HEK293 (cell line): ENCODE measurements at regions of chr9 and their contacts with region 1.

Region 1: GRCh38 chr9:137034863-137035761 is 3.2 kb upstream of the FUT7 start:
- H3K4me3 ChIP-seq: no peak overlapping the region
- H3K27ac ChIP-seq: no peak overlapping the region
- H3K4me1 ChIP-seq: no peaks in the 10 kb centered on the region
- CTCF ChIP-seq: peak; percentile 93

Region 2: DNA sequence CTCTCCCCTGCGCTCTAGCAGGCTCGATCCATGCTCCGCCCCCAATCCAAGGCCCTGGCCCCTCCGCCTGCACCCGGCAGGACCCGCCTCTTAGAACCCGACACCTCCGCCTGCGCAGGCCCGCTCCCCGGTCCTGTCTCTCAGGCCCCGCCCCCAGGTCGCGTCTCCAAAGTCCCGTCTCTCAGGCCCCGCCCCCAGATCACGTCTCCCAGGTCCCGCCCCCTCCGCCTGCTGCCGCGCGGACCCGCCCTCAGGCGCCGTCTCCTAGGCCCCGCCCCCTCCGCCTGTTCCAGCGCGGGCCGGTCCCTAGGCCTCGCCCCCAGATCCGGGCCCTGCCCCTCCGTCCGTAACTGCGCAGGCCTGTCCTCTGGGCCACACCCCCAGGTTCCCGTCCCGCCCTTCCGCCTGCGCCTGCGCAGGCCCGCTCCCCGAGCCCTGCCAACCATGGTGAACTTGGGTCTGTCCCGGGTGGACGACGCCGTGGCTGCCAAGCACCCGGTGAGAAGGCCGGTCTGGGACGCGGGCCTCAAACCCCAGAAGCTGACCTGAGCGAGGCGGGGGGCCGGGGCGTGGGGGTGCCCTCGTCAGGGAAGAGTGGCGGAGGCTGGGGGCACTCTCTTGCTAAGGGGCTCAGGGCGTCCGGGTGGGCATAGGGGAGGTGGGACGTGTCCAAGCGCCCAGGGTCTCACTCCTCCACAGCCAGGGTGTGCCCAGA is 244.0 kb before region 1 on chr9 and contains the start of gene TMEM141:
- CTCF ChIA-PET with region 1: interaction called, 61 read pairs
- POLR2A ChIA-PET with region 1: interaction called, 8 read pairs
- H3K4me3 ChIP-seq: peak within 1 kb of the TSS; percentile 47
- H3K27ac ChIP-seq: peak within 1 kb of the TSS; percentile 74
- H3K4me1 ChIP-seq: peaks cover 7% of the 10 kb centered on the region
- CTCF ChIP-seq: no peak

Region 3: GRCh38 chr9:136944519-136945279 is 90.4 kb before region 1 on chr9 and contains the starts of genes C8G and FBXW5:
- CTCF ChIA-PET with region 1: interaction called, 119 read pairs
- POLR2A ChIA-PET with region 1: interaction called, 16 read pairs
- H3K4me3 ChIP-seq: peak within 1 kb of the TSS; percentile 51
- H3K27ac ChIP-seq: peak within 1 kb of the TSS; percentile 90
- H3K4me1 ChIP-seq: no peaks in the 10 kb centered on the region
- CTCF ChIP-seq: peak; percentile 96

Region 4: GRCh38 chr9:136991993-136992818 is 42.9 kb before region 1 on chr9 and contains the start of gene PAXX:
- CTCF ChIA-PET with region 1: interaction called, 38 read pairs
- POLR2A ChIA-PET with region 1: interaction called, 6 read pairs
- H3K4me3 ChIP-seq: peak within 1 kb of the TSS; percentile 72
- H3K27ac ChIP-seq: peak within 1 kb of the TSS; percentile 83
- H3K4me1 ChIP-seq: peaks cover 5% of the 10 kb centered on the region
- CTCF ChIP-seq: peak; percentile 33; the same call in 1 of the 2 replicates

Region 5: DNA sequence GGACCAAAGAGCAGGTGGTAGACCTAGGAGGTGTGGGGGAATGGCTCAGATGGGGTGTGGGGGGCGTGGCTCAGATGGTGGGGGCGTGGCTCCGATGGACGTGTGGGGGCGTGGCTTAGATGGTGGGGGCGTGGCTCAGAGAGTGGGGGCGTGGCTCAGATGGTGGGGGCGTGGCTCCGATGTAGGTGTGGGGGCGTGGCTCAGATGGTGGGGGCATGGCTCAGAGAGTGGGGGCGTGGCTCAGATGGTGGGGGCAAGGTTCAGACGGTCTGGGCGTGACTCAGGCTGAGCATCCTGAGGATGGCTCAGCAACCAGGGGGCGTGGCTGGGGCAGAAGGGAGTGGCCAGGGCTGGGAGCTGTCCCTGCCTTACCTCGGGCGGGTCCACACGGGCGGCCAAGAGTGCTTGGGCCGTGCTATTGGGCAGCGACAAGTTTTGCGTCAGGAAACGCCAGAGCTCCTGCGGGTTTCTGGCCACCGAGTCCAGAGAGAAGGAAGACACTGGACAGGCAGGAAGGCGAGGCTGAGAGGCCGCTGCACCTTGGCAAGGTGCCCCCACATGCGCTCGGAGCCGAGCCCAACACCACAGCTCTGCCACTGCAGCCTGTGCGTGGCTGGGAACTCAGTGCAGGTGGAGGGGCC is 13.0 kb before region 1 on chr9:
- CTCF ChIA-PET with region 1: interaction called, 42 read pairs
- POLR2A ChIA-PET with region 1: interaction called, 6 read pairs
- H3K4me3 ChIP-seq: no peak overlapping the region
- H3K27ac ChIP-seq: no peak overlapping the region
- H3K4me1 ChIP-seq: no peaks in the 10 kb centered on the region; the same call in 1 of the 2 replicates
- CTCF ChIP-seq: no peak

Region 6: DNA sequence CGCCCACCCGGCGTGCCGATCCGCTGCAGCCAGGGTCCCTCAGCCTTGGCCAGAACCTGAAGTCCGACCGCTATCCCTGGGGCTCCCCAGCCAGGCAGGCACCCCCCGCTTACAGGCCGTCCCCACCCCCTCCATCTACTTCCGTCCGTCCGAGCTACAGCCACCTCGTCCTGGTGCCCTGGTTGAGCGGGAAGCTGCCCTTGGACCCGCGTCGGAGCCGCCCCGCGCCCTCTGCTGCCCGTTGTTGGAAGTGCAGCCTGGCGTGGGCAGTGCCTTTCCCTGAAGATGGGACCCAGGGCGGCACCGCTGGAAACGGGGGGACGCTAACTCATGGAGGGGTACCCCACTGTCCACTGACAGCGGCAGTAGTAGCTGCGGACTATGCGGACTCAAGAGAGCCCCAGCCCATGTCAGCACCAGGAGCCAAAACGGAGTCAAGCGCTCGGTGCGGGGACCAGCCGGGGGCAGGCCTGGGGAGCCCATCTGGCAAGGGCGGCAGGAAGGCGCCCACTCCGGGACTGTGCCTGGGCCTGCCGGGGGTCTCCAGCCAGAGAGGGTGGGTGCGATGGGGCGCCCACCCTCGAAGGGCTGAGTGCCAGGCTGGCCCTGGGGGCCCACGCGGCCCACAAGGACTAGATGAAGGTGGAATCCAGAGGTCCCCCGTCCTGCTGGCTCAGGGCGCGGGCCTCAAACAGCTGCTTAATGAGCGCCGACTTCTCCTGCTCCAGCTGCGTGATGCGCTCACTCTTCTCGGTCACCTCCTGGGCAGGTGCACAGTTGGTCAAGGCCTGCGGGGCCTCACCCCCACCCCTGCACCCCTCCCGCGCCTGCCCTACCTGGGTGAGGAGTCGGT is 29.1 kb after region 1 on chr9:
- CTCF ChIA-PET with region 1: interaction called, 86 read pairs
- POLR2A ChIA-PET with region 1: interaction called, 3 read pairs
- H3K4me3 ChIP-seq: no peak overlapping the region
- H3K27ac ChIP-seq: no peak overlapping the region
- H3K4me1 ChIP-seq: peaks cover 3% of the 10 kb centered on the region; the same call in 1 of the 2 replicates
- CTCF ChIP-seq: peak; percentile 95